K562 (cell line): ENCODE measurements at regions of chr22 and their contacts with region 1.

Region 1: GRCh38 chr22:19891317-19892256 is 36.9 kb upstream of the GNB1L start:
- DNase-seq: peak; percentile 98 to 99 (median 98)
- ATAC-seq: peak; percentile 92
- H3K4me3 ChIP-seq: no peak overlapping the region
- H3K27ac ChIP-seq: peak overlapping the region; percentile 46; the same call in 2 of the 3 replicates
- H3K4me1 ChIP-seq: peaks cover 24 to 62% of the 10 kb centered on the region in 2 experiments
- H3K27me3 ChIP-seq: no peaks in the 10 kb centered on the region
- CTCF ChIP-seq: peak in 2 of 3 experiments; percentile 9 to 33; a peak in 2 of 6 replicates
- EP300 ChIP-seq: peak; percentile 99
- POLR2A ChIP-seq: no peak; the same call in 1 of the 2 replicates
- RAD21 ChIP-seq: peak in 1 of 2 experiments; percentile 54; a peak in 2 of 4 replicates

Region 2: GRCh38 chr22:19820628-19821522 is 70.7 kb before region 1 on chr22:
- CTCF ChIA-PET with region 1: no interaction called
- POLR2A ChIA-PET with region 1: no interaction called
- in situ Hi-C with region 1: no loop called
- intact Hi-C with region 1: no loop called
- DNase-seq: no peak
- ATAC-seq: peak; percentile 8; the same call in 1 of the 3 replicates
- H3K4me3 ChIP-seq: no peak overlapping the region
- H3K27ac ChIP-seq: no peak overlapping the region
- H3K4me1 ChIP-seq: peaks cover 7 to 77% of the 10 kb centered on the region in 2 experiments; a peak in 4 of 5 replicates
- H3K27me3 ChIP-seq: no peaks in the 10 kb centered on the region
- CTCF ChIP-seq: peak; percentile 43 to 57 (median 56); a peak in 5 of 6 replicates
- EP300 ChIP-seq: no peak
- POLR2A ChIP-seq: no peak
- RAD21 ChIP-seq: peak in 1 of 2 experiments; percentile 48; a peak in 2 of 4 replicates

Region 3: GRCh38 chr22:19879695-19880506 is 11.7 kb before region 1 on chr22:
- CTCF ChIA-PET with region 1: no interaction called
- POLR2A ChIA-PET with region 1: interaction called, 141 read pairs
- in situ Hi-C with region 1: no loop called
- intact Hi-C with region 1: no loop called
- DNase-seq: no peak
- ATAC-seq: no peak
- H3K4me3 ChIP-seq: no peak overlapping the region
- H3K27ac ChIP-seq: no peak overlapping the region
- H3K4me1 ChIP-seq: peaks cover 12 to 78% of the 10 kb centered on the region in 2 experiments
- H3K27me3 ChIP-seq: peaks cover 0 to 9% of the 10 kb centered on the region in 2 experiments; a peak in 1 of 5 replicates
- CTCF ChIP-seq: no peak
- EP300 ChIP-seq: no peak
- POLR2A ChIP-seq: no peak
- RAD21 ChIP-seq: no peak

Region 4: GRCh38 chr22:20279662-20280134 is 388.1 kb after region 1 on chr22:
- CTCF ChIA-PET with region 1: no interaction called
- POLR2A ChIA-PET with region 1: no interaction called
- in situ Hi-C with region 1: no loop called
- intact Hi-C with region 1: no loop called
- DNase-seq: peak in 3 of 4 experiments; percentile 55 to 72 (median 62)
- ATAC-seq: peak; percentile 23
- H3K4me3 ChIP-seq: no peak overlapping the region
- H3K27ac ChIP-seq: no peak overlapping the region
- H3K4me1 ChIP-seq: peaks cover 0 to 27% of the 10 kb centered on the region in 2 experiments; a peak in 3 of 5 replicates
- H3K27me3 ChIP-seq: peaks cover 38 to 85% of the 10 kb centered on the region in 2 experiments; a peak in 4 of 5 replicates
- CTCF ChIP-seq: no peak
- EP300 ChIP-seq: no peak
- POLR2A ChIP-seq: no peak
- RAD21 ChIP-seq: no peak

Region 5: GRCh38 chr22:20295262-20296064 is 403.9 kb after region 1 on chr22:
- CTCF ChIA-PET with region 1: no interaction called
- POLR2A ChIA-PET with region 1: no interaction called
- in situ Hi-C with region 1: no loop called
- intact Hi-C with region 1: no loop called
- DNase-seq: peak in 2 of 4 experiments; percentile 51 to 56
- ATAC-seq: no peak
- H3K4me3 ChIP-seq: no peak overlapping the region
- H3K27ac ChIP-seq: no peak overlapping the region
- H3K4me1 ChIP-seq: peaks cover 8 to 39% of the 10 kb centered on the region in 2 experiments
- H3K27me3 ChIP-seq: peaks cover 72 to 91% of the 10 kb centered on the region in 2 experiments
- CTCF ChIP-seq: 0 out of 6 replicates have a peak, but pooled peaks of 1 of the 3 experiments have one; percentile 23
- EP300 ChIP-seq: no peak
- POLR2A ChIP-seq: no peak
- RAD21 ChIP-seq: no peak